Ovary (tissue), 10 donors: ENCODE measurements at regions of chr15 and their contacts with region 1.

Region 1: DNA sequence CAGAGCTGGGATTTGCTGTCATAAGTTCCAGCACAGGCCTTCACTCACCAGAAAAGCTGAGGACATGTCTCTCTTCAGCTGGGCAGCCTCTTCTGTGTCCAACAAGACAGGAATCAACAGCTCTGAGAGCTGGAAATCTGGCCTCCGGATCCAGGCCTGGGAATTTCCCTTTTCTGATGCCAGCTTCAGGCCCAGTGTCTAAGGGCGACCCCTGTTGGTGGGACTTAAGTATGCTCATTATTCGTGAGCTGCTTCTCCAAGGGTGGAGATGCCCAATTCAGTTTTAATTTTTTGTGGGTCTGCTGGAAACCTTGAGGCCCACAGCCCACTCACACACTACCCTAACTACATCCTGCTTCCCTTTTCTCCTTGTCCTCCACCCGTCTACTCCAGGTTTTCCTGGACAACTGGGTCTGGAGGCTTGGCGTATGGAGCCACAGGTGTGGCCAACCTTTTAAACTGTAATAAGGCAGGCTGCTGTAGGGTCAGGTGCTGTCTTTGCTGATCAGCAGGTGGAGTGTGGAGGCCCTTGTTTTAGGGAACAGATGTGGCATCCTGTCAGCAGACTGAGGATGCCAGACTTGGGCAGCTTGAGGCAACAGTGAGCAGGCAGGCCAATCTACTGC is 2.6 kb upstream of the CEMIP start:
- DNase-seq: peak; percentile 62 to 69 (median 65)
- H3K4me3 ChIP-seq: no peak overlapping the region
- H3K27ac ChIP-seq: no peak overlapping the region
- H3K4me1 ChIP-seq: peaks cover 15% of the 10 kb centered on the region
- H3K27me3 ChIP-seq: no peaks in the 10 kb centered on the region
- CTCF ChIP-seq: peak; percentile 54 to 59 (median 56)
- EP300 ChIP-seq: no peak
- POLR2A ChIP-seq: no peak

Region 2: GRCh38 chr15:80567721-80568157 is 208.8 kb before region 1 on chr15:
- intact Hi-C with region 1: loop called (anchors 5 to 10 kb)
- DNase-seq: peak in 4 of 5 donors; percentile 45 to 65 (median 50)
- H3K4me3 ChIP-seq: no peak overlapping the region
- H3K27ac ChIP-seq: no peak overlapping the region
- H3K4me1 ChIP-seq: no peaks in the 10 kb centered on the region
- H3K27me3 ChIP-seq: no peaks in the 10 kb centered on the region
- CTCF ChIP-seq: peak; percentile 50 to 66 (median 56)
- EP300 ChIP-seq: no peak
- POLR2A ChIP-seq: no peak

Region 3: GRCh38 chr15:80635953-80636352 is 140.6 kb before region 1 on chr15:
- intact Hi-C with region 1: no loop called
- DNase-seq: peak in 3 of 5 donors; percentile 26 to 46 (median 30)
- H3K4me3 ChIP-seq: no peak overlapping the region
- H3K27ac ChIP-seq: no peak overlapping the region
- H3K4me1 ChIP-seq: no peaks in the 10 kb centered on the region
- H3K27me3 ChIP-seq: no peaks in the 10 kb centered on the region
- CTCF ChIP-seq: no peak
- EP300 ChIP-seq: no peak
- POLR2A ChIP-seq: no peak